IMR-90 (cell line): ENCODE measurements at regions of chr5 and their contacts with region 1.

Region 1: DNA sequence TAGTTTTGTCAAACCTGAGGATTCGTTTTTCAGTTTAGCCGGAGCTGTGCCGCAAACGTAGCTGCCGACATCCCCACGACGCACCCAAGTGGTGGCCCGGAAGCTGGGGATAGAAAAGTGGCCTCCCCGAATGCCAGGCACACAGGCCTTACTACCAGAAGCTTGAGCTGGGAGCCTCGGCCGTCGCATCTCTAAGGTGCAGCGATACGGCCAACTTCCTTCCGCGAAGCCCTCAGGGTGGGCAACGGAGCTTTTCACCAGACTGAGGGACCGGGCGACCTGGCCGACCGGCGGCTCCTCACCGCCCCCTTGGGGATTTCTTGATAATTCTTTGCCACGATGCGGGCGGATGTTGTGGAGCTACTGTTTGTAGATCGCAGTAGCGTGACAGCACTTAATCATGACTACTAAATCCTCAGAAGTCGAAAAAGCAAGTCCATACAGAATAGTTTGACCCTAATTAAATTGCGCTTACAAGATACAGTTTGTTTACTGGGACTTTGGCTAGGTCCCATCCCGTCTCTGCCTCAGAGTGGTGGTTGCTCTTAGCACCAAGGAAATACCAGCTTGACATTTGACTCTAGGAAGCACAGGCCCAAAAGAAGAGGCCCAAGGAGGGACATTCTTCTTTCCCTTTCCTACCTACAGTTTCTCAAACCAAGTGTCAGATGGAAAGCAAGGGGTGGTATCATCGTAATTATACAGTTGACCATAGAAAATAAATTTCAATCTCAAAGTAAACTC is 613 bp upstream of the TMEM267 start:
- DNase-seq: peak; percentile 82
- ATAC-seq: peak; percentile 75
- H3K4me3 ChIP-seq: peak overlapping the region; percentile 62
- H3K27ac ChIP-seq: peak overlapping the region; percentile 86
- H3K4me1 ChIP-seq: peaks cover 2% of the 10 kb centered on the region; the same call in 1 of the 2 replicates
- H3K27me3 ChIP-seq: no peaks in the 10 kb centered on the region
- CTCF ChIP-seq: peak; percentile 71
- POLR2A ChIP-seq: no peak; the same call in 1 of the 2 replicates
- RAD21 ChIP-seq: peak; percentile 58

Region 2: DNA sequence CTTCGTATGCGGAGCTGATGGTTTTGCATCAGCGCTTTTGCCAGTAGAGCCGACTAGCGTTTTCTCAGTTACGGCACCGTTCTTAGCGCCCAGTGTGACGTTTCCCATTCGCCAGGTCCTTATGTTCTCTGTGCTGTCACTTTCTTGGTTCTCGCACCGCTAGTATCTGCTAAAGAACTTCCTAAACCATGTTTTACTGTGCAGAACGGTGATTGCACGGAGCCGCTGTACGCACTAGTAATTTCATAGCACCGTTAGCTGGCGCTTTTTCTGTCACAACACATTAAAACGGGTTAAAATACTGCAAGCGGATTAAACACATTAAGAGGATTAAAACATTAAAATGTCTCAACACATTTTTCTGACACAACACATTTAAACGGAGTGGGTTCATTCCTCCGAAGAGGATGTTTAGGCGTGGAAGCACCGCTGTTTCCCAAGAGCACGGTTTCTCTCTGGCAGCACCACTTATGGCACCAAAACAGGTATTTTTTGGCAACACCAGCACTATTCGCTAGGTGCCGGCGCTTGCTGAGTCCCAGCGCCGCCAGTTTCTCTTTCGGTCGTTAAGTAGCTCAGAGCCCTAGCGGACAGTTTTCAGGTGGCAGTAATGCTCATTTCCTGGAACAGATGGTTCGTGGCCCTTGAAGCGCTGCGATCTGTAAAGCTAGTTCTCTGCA is 464.5 kb before region 1 on chr5:
- CTCF ChIA-PET with region 1: no interaction called
- POLR2A ChIA-PET with region 1: interaction called, 7 read pairs
- dilution Hi-C with region 1: no loop called
- in situ Hi-C with region 1: no loop called
- intact Hi-C with region 1: loop called (anchors 10 kb)
- DNase-seq: peak; percentile 91
- ATAC-seq: peak; percentile 50
- H3K4me3 ChIP-seq: peak overlapping the region; percentile 64
- H3K27ac ChIP-seq: peak overlapping the region; percentile 96
- H3K4me1 ChIP-seq: peaks cover 8% of the 10 kb centered on the region
- H3K27me3 ChIP-seq: no peaks in the 10 kb centered on the region
- CTCF ChIP-seq: peak; percentile 49
- POLR2A ChIP-seq: no peak
- RAD21 ChIP-seq: 0 out of 2 replicates have a peak, but pooled peaks have one; percentile 29

Region 3: GRCh38 chr5:43105369-43106289 is 378.6 kb before region 1 on chr5:
- CTCF ChIA-PET with region 1: no interaction called
- POLR2A ChIA-PET with region 1: no interaction called
- dilution Hi-C with region 1: no loop called
- in situ Hi-C with region 1: no loop called
- intact Hi-C with region 1: loop called (anchors 5 kb)
- DNase-seq: peak; percentile 96
- ATAC-seq: peak; percentile 94
- H3K4me3 ChIP-seq: peak overlapping the region; percentile 40
- H3K27ac ChIP-seq: peak overlapping the region; percentile 66
- H3K4me1 ChIP-seq: peaks cover 1% of the 10 kb centered on the region; the same call in 1 of the 2 replicates
- H3K27me3 ChIP-seq: no peaks in the 10 kb centered on the region
- CTCF ChIP-seq: peak; percentile 100; the same call in 1 of the 2 replicates
- POLR2A ChIP-seq: no peak
- RAD21 ChIP-seq: peak; percentile 83

Region 4: DNA sequence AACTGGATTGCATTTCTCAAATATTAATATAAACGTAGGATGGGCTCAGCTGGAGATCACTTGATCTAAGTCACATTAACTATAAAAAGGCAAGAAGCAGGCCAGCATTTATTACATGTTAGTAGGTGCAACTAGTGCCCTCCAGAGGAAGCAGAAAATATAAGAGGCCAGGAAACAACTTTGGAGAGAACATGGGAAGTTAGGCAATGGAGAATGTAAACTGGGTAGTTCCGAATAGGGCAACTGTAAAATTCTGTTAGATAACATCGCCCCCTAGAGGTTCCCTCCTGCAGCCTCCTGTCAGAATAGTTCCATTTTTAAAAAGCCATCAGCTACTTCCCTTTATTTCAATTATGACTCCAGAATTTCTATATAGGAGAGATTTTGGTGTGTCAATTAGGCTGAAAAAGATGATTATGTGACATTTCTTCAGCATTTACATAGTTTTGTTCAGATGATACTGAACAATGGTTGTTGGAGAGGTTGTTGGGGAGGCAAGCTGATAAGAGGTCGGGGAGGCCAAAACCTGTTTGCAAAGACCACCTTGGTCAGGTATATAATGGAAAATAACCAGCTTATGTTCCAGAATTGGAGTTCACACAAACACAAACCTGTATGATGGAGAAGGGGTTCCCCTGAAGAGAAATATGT is 94.5 kb before region 1 on chr5:
- CTCF ChIA-PET with region 1: interaction called, 15 read pairs
- POLR2A ChIA-PET with region 1: no interaction called
- dilution Hi-C with region 1: no loop called
- in situ Hi-C with region 1: no loop called
- intact Hi-C with region 1: no loop called
- DNase-seq: peak; percentile 90
- ATAC-seq: peak; percentile 99
- H3K4me3 ChIP-seq: no peak overlapping the region
- H3K27ac ChIP-seq: no peak overlapping the region
- H3K4me1 ChIP-seq: no peaks in the 10 kb centered on the region
- H3K27me3 ChIP-seq: peaks cover 5% of the 10 kb centered on the region
- CTCF ChIP-seq: peak; percentile 93
- POLR2A ChIP-seq: no peak
- RAD21 ChIP-seq: peak; percentile 78

Region 5: GRCh38 chr5:43425965-43426364 is 58.3 kb before region 1 on chr5:
- CTCF ChIA-PET with region 1: interaction called, 10 read pairs
- POLR2A ChIA-PET with region 1: no interaction called
- dilution Hi-C with region 1: no loop called
- in situ Hi-C with region 1: no loop called
- intact Hi-C with region 1: no loop called
- DNase-seq: peak; percentile 80
- ATAC-seq: peak; percentile 90
- H3K4me3 ChIP-seq: no peak overlapping the region
- H3K27ac ChIP-seq: no peak overlapping the region
- H3K4me1 ChIP-seq: peaks cover 3% of the 10 kb centered on the region
- H3K27me3 ChIP-seq: no peaks in the 10 kb centered on the region
- CTCF ChIP-seq: no peak
- POLR2A ChIP-seq: no peak
- RAD21 ChIP-seq: no peak

Region 6: GRCh38 chr5:43497311-43498104 is 13.2 kb after region 1 on chr5:
- CTCF ChIA-PET with region 1: interaction called, 7 read pairs
- POLR2A ChIA-PET with region 1: interaction called, 14 read pairs
- dilution Hi-C with region 1: no loop called
- in situ Hi-C with region 1: no loop called
- intact Hi-C with region 1: no loop called
- DNase-seq: no peak
- ATAC-seq: no peak
- H3K4me3 ChIP-seq: no peak overlapping the region
- H3K27ac ChIP-seq: no peak overlapping the region
- H3K4me1 ChIP-seq: no peaks in the 10 kb centered on the region
- H3K27me3 ChIP-seq: no peaks in the 10 kb centered on the region
- CTCF ChIP-seq: no peak
- POLR2A ChIP-seq: no peak
- RAD21 ChIP-seq: no peak